Dendritic cell treated with granulocyte-macrophage colony-stimulating factor and Interleukin-4, amounts not matched to agents 40 ng/mL and 50 ng/mL, for 4 days (primary cell): ENCODE measurements at regions of chr12 and their contacts with region 1.

Region 1: DNA sequence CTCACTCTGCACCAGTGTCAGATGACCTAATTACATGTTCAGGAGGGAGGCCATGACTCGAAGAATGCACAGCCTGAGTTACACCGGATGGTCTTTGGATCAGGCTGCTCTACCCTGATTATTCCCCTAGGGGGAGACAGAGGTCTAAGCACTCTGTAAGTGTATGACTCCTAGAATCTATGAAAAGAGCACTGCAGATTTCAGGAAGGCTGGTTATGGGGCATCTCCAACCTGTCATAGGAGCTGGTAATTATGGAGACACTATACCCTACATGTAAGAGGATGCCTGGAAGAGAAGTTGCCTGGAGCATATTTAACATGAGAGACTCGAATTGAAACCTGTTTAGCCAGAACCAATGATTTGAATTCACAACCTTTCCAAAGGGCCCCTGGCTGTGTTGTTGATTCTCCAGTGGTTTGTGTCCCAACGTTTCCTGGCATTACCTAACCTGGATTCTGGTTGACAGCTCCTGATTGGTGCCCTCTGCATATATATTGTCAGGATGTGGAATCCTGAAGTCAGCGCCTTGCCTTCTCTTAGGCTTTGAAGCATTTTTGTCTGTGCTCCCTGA is at the start of gene MUCL1:
- H3K4me3 Mint-ChIP-seq: no peak within 1 kb of the TSS
- H3K27ac Mint-ChIP-seq: no peak within 1 kb of the TSS
- H3K4me1 Mint-ChIP-seq: peaks cover 15% of the 10 kb centered on the region
- H3K27me3 Mint-ChIP-seq: no peaks in the 10 kb centered on the region

Region 2: GRCh38 chr12:54701940-54702592 is 152.0 kb before region 1 on chr12:
- intact Hi-C with region 1: loop called (anchors 2 kb)
- H3K4me3 Mint-ChIP-seq: no peak overlapping the region
- H3K27ac Mint-ChIP-seq: no peak overlapping the region
- H3K4me1 Mint-ChIP-seq: peaks cover 13% of the 10 kb centered on the region
- H3K27me3 Mint-ChIP-seq: peaks cover 2% of the 10 kb centered on the region

Region 3: GRCh38 chr12:54749191-54749818 is 104.8 kb before region 1 on chr12:
- intact Hi-C with region 1: loop called (anchors 1 kb)
- H3K4me3 Mint-ChIP-seq: no peak overlapping the region
- H3K27ac Mint-ChIP-seq: no peak overlapping the region
- H3K4me1 Mint-ChIP-seq: peaks cover 9% of the 10 kb centered on the region
- H3K27me3 Mint-ChIP-seq: no peaks in the 10 kb centered on the region

Region 4: GRCh38 chr12:54759751-54760150 is 94.3 kb before region 1 on chr12:
- intact Hi-C with region 1: loop called (anchors 5 kb)
- H3K4me3 Mint-ChIP-seq: no peak overlapping the region
- H3K27ac Mint-ChIP-seq: no peak overlapping the region
- H3K4me1 Mint-ChIP-seq: no peaks in the 10 kb centered on the region
- H3K27me3 Mint-ChIP-seq: no peaks in the 10 kb centered on the region

Region 5: DNA sequence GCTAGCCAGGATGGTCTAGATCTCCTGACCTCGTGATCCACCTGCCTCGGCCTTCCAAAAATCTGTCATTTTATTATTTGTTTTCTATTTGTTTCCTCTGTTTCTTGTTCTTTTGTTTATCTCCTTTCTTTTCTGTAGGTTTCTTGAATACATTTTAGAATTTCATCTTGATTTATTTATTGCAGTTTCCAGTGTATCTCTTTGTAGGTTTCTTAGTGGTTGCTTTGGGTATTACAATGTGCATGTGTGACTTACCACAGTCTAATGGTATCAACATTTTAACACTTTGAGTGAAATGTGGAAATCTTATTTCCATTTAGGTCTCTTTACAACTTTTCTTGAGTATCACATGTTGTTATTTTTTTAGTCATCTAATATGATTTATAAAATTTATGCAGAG is 29.7 kb before region 1 on chr12:
- intact Hi-C with region 1: no loop called
- H3K4me3 Mint-ChIP-seq: no peak overlapping the region
- H3K27ac Mint-ChIP-seq: no peak overlapping the region
- H3K4me1 Mint-ChIP-seq: peaks cover 3% of the 10 kb centered on the region
- H3K27me3 Mint-ChIP-seq: no peaks in the 10 kb centered on the region